Heart right ventricle (tissue), 16 donors: ENCODE measurements at regions of chr16 and their contacts with region 1.

Region 1: DNA sequence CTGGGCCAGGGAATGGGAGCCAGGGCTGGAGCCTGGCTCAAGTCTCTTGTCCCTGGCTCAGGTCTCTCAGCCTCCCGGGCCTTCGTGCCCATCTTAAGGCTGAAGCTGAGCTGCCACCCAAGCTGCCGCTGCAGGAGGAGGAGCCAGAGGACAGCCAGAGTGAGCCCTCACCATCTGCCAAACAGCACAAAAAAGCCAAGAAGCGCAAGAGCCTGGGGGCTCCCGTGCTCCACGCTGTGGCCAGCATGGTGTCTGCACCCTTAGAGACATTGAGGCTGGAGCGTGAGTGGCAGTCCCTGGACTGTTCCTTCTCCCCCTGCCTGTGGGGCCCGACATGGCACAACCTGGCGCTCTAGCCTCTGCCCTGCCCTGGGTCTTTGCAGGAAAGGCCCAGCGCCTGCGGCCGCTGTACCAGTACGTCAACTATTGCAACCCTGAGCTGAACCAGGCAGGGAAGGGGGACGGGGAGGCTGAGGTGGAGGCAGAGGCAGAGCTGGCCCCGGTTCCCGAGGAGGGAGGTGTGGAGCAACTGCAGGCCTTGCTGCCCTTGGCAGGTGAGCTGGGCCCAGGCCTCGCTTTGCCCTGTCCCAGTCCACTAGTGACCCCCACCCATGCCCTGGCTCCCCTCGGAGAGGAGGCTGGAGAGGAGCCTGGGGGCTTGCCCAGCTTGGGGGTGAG is 1.3 kb downstream of the C16orf86 start:
- DNase-seq: peak; percentile 82 to 86
- ATAC-seq: peak; percentile 83 to 91 (median 88)
- H3K4me3 ChIP-seq: peak overlapping the region in 9 of 10 donors; percentile 58 to 92 (median 87)
- H3K27ac ChIP-seq: peak overlapping the region; percentile 81 to 98 (median 94)
- H3K4me1 ChIP-seq: peaks cover 10 to 46% (median 32%) of the 10 kb centered on the region in 9 donors
- H3K27me3 ChIP-seq: no peaks in the 10 kb centered on the region
- CTCF ChIP-seq: peak; percentile 67 to 93 (median 84)

Region 2: DNA sequence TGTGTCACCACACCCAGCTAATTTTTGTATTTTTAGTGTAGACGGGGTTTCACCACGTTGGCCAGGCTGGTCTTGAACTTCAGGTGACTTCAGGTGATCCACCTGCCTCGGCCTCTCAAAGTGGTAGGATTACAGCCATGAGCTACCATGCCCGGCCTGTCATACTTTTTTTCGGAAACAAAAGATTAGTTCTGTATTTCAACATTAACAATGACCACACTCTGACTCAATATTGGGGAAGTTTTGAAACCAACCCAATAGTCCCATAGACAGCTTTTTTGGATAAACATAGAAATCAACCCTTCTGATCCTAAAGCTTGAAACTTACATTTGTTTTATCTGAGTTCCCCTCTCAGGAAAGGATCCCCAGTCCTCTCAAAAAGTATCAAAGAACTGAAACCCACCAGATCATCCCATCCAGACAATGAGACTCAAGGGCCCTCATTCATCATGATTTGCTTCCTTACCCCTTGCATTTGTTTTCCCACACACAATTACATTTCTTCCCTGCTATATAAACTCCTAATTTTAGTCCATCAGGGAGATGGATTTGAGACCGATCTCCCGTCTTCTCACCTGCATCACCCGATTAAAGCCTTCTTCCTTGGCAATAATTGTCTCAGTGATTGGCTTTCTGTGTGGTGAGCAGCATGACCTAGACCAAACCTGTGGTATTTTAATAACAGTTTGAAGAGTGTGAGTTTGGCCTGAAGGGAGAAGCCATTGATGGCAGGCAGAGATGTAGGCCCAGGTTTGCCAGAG is 177.4 kb before region 1 on chr16:
- intact Hi-C with region 1: loop called in 1 of 10 experiments (anchors 10 kb)
- DNase-seq: no peak
- ATAC-seq: no peak
- H3K4me3 ChIP-seq: no peak overlapping the region
- H3K27ac ChIP-seq: peak overlapping the region in 5 of 10 donors; percentile 25 to 82 (median 58)
- H3K4me1 ChIP-seq: peaks cover 2 to 84% (median 16%) of the 10 kb centered on the region in 9 donors
- H3K27me3 ChIP-seq: no peaks in the 10 kb centered on the region
- CTCF ChIP-seq: no peak

Region 3: DNA sequence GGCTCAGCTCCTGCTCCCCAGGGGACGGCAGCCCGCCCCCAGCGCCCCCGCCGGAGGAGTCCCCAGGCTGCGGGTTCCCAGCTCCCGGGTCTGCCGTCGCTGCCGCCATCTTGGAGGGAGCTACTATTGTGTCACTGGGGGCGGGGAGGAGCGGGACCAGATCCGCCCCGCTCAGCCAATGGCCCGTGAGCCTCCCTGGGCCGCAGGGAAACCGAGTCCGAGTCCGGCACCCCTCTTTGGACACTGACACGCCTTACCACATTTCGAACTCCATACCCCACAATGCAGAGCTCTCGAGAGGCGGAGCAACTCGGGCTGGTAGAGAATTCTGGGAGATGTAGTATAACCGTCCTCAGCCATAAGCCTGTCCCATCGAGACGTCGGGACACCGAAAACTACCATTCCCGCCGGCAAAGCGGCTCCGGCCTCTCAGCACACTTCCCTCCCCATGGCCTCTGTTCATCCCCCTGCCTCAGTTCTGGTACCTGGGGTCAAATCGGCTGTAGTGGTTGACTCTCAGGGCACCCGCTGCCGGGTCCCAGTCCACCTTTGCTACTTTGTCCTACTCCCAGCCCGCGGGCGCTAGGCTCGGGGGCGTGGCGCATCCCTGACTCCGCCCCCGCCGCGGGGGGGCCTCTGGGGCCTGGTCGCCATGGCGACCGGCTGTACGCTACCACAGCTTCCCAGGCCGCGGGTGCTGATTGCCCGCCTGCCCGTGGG is 138.6 kb after region 1 on chr16 and contains the starts of genes RANBP10 and TSNAXIP1:
- intact Hi-C with region 1: loop called in 9 of 10 experiments (anchors 5 to 10 kb)
- DNase-seq: peak; percentile 95 to 98
- ATAC-seq: peak; percentile 97 to 99 (median 98)
- H3K4me3 ChIP-seq: peak within 1 kb of the TSS; percentile 54 to 100 (median 91)
- H3K27ac ChIP-seq: peak within 1 kb of the TSS in 9 of 10 donors; percentile 77 to 94 (median 87)
- H3K4me1 ChIP-seq: peaks cover 8 to 39% (median 20%) of the 10 kb centered on the region in 9 donors
- H3K27me3 ChIP-seq: no peaks in the 10 kb centered on the region
- CTCF ChIP-seq: no peak
- total RNA-seq, gene RANBP10: 11.1 to 21.6 (median 15.6) TPM
- total RNA-seq, gene TSNAXIP1: 0.15 to 1.1 (median 0.48) TPM

Region 4: GRCh38 chr16:67907397-67908180 is 239.6 kb after region 1 on chr16:
- intact Hi-C with region 1: no loop called
- DNase-seq: no peak
- ATAC-seq: no peak
- H3K4me3 ChIP-seq: no peak overlapping the region
- H3K27ac ChIP-seq: no peak overlapping the region
- H3K4me1 ChIP-seq: peaks cover 0 to 26% (median 3%) of the 10 kb centered on the region in 9 donors
- H3K27me3 ChIP-seq: no peaks in the 10 kb centered on the region
- CTCF ChIP-seq: no peak